ENCODE measurements at regions of chr10 and their contacts with region 1.

Region 1: DNA sequence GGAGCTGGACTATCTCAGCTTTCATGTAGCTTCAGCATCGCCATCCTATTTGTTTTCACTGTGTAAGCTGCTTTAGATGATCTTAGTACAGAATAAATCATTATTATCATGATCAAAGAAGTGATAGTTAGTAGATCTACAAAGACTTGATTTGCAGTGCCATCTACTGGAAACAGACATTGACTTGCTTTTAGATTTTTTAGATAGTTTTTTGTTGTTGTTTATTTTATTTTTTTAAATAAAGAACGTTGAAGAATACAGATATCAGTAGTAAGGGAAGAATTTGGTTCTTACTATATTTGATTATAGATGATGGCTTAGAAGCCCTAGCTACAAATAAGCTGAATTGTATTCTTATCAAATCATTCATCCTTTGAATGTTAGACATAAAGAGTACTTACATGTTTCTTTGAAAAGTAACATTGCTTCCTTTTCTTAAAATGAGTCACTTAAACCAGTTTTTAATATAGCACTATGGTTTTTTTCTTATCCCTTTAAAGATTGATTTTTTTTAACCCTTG is 6.3 kb upstream of the SFMBT2 start:
- DNase-seq: no peak
- ATAC-seq: no peak
- H3K4me3 ChIP-seq: no peak overlapping the region
- H3K27ac ChIP-seq: no peak overlapping the region
- H3K4me1 ChIP-seq: no peaks in the 10 kb centered on the region
- H3K27me3 ChIP-seq: peaks cover 1 to 9% of the 10 kb centered on the region in 2 experiments; a peak in 1 of 5 replicates
- CTCF ChIP-seq: peak; percentile 38
- EP300 ChIP-seq: no peak
- POLR2A ChIP-seq: no peak
- RAD21 ChIP-seq: no peak

Region 2: GRCh38 chr10:6843481-6843881 is 573.7 kb before region 1 on chr10:
- CTCF ChIA-PET with region 1: no interaction called
- POLR2A ChIA-PET with region 1: no interaction called
- in situ Hi-C with region 1: no loop called
- intact Hi-C with region 1: loop called (anchors 5 kb)
- DNase-seq: no peak
- ATAC-seq: peak; percentile 31; the same call in 1 of the 3 replicates
- H3K4me3 ChIP-seq: no peak overlapping the region
- H3K27ac ChIP-seq: no peak overlapping the region
- H3K4me1 ChIP-seq: no peaks in the 10 kb centered on the region
- H3K27me3 ChIP-seq: no peaks in the 10 kb centered on the region
- CTCF ChIP-seq: peak; percentile 22
- EP300 ChIP-seq: no peak
- POLR2A ChIP-seq: no peak
- RAD21 ChIP-seq: no peak

Region 3: DNA sequence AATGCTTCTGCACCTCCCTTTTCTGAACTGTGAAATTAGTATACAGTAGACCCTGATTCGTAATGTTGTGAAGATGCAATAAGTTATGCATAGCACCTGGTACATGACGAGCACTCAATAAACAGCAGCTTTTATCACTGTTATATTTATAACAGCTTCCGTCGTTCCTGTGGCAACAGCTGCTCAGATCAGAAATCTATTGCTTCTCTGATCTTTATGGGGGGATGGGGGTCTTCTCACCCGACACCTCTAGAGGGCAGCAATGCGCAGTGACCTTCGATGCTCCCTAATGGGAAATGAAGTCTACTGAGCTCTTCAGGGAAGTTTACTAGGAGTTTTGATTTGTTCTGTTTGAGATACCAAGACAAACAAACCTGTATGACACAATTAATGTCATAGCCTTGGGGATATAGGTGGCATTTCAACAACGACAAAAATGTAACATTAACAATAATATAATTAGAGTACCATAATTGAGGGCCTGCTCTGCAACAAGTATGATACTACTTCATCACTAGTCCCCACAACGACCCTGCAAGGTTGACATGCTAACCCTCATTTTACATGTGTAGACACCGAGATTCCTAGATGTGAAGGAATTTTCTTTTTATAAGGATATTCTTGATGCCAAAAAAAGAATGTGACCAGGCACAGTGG is 295.9 kb before region 1 on chr10:
- CTCF ChIA-PET with region 1: interaction called, 3 read pairs
- POLR2A ChIA-PET with region 1: no interaction called
- in situ Hi-C with region 1: no loop called
- intact Hi-C with region 1: loop called (anchors 1 kb)
- DNase-seq: peak; percentile 27
- ATAC-seq: peak; percentile 77
- H3K4me3 ChIP-seq: no peak overlapping the region
- H3K27ac ChIP-seq: no peak overlapping the region
- H3K4me1 ChIP-seq: no peaks in the 10 kb centered on the region
- H3K27me3 ChIP-seq: peaks cover 0 to 7% of the 10 kb centered on the region in 2 experiments; a peak in 1 of 5 replicates
- CTCF ChIP-seq: peak; percentile 61
- EP300 ChIP-seq: no peak
- POLR2A ChIP-seq: no peak
- RAD21 ChIP-seq: no peak

Region 4: DNA sequence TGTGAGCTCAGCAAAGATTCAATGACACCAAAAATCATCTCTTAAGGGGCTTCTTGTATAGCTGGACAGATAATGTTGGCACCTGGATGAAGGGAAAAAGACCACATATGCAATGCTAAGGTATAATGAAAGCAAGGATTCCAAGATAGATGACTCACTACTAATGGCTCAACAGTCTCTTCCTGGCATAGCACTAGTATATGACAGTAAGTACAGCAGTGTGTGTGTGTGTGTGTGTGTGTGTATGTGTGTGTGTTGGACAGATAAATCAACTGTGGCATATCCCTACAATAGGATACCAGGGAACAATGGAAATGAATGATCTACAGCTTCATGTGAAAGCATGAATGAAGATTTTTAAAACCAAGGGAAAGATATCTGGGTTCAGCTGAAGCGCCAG is 263.4 kb before region 1 on chr10:
- CTCF ChIA-PET with region 1: no interaction called
- POLR2A ChIA-PET with region 1: no interaction called
- in situ Hi-C with region 1: no loop called
- intact Hi-C with region 1: no loop called
- DNase-seq: no peak
- ATAC-seq: no peak
- H3K4me3 ChIP-seq: no peak overlapping the region
- H3K27ac ChIP-seq: no peak overlapping the region
- H3K4me1 ChIP-seq: no peaks in the 10 kb centered on the region
- H3K27me3 ChIP-seq: no peaks in the 10 kb centered on the region; a peak in 1 of 5 replicates
- CTCF ChIP-seq: no peak
- EP300 ChIP-seq: no peak
- POLR2A ChIP-seq: no peak
- RAD21 ChIP-seq: no peak

Region 5: GRCh38 chr10:7260412-7260900 is 156.7 kb before region 1 on chr10:
- CTCF ChIA-PET with region 1: no interaction called
- POLR2A ChIA-PET with region 1: no interaction called
- in situ Hi-C with region 1: no loop called
- intact Hi-C with region 1: loop called (anchors 1 kb)
- DNase-seq: peak; percentile 45
- ATAC-seq: peak; percentile 86
- H3K4me3 ChIP-seq: no peak overlapping the region
- H3K27ac ChIP-seq: no peak overlapping the region
- H3K4me1 ChIP-seq: no peaks in the 10 kb centered on the region
- H3K27me3 ChIP-seq: peaks cover 0 to 3% of the 10 kb centered on the region in 2 experiments; a peak in 2 of 5 replicates
- CTCF ChIP-seq: peak; percentile 26; the same call in 1 of the 2 replicates
- EP300 ChIP-seq: no peak
- POLR2A ChIP-seq: no peak
- RAD21 ChIP-seq: no peak

Region 6: GRCh38 chr10:7302393-7303054 is 114.6 kb before region 1 on chr10:
- CTCF ChIA-PET with region 1: no interaction called
- POLR2A ChIA-PET with region 1: no interaction called
- in situ Hi-C with region 1: no loop called
- intact Hi-C with region 1: no loop called
- DNase-seq: no peak
- ATAC-seq: no peak
- H3K4me3 ChIP-seq: no peak overlapping the region
- H3K27ac ChIP-seq: no peak overlapping the region
- H3K4me1 ChIP-seq: no peaks in the 10 kb centered on the region
- H3K27me3 ChIP-seq: peaks cover 0 to 17% of the 10 kb centered on the region in 2 experiments; a peak in 1 of 5 replicates
- CTCF ChIP-seq: no peak
- EP300 ChIP-seq: no peak
- POLR2A ChIP-seq: no peak
- RAD21 ChIP-seq: no peak

Region 7: DNA sequence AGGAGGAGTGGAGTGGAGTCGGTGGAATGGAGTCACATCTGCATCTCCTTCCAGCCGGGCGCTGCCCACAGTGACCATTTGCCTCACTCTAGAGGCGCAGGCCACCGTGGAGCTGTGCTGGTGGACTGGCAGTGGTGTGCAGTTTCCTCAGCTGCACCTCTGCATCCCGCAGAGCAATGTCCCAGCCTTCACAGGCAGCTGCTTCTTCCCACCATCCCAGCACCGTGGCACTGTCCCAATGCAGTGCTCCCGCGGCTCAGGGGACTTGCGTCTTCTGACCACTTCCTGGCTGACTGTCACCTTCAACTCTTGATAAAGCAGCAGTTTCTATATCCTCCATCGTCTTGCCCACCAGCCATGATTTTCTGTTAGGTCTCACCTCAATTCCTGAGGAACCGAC is 84.0 kb after region 1 on chr10:
- CTCF ChIA-PET with region 1: no interaction called
- POLR2A ChIA-PET with region 1: no interaction called
- in situ Hi-C with region 1: no loop called
- intact Hi-C with region 1: loop called (anchors 5 kb)
- DNase-seq: no peak
- ATAC-seq: no peak
- H3K4me3 ChIP-seq: no peak overlapping the region
- H3K27ac ChIP-seq: no peak overlapping the region
- H3K4me1 ChIP-seq: peaks cover 9% of the 10 kb centered on the region
- H3K27me3 ChIP-seq: peaks cover 0 to 7% of the 10 kb centered on the region in 2 experiments; a peak in 2 of 5 replicates
- CTCF ChIP-seq: no peak
- EP300 ChIP-seq: no peak
- POLR2A ChIP-seq: no peak
- RAD21 ChIP-seq: no peak

Measured in HepG2 (cell line).